Right ventricle myocardium inferior (tissue), 1 donor: ENCODE measurements at regions of chr6 and their contacts with region 1.

Region 1: DNA sequence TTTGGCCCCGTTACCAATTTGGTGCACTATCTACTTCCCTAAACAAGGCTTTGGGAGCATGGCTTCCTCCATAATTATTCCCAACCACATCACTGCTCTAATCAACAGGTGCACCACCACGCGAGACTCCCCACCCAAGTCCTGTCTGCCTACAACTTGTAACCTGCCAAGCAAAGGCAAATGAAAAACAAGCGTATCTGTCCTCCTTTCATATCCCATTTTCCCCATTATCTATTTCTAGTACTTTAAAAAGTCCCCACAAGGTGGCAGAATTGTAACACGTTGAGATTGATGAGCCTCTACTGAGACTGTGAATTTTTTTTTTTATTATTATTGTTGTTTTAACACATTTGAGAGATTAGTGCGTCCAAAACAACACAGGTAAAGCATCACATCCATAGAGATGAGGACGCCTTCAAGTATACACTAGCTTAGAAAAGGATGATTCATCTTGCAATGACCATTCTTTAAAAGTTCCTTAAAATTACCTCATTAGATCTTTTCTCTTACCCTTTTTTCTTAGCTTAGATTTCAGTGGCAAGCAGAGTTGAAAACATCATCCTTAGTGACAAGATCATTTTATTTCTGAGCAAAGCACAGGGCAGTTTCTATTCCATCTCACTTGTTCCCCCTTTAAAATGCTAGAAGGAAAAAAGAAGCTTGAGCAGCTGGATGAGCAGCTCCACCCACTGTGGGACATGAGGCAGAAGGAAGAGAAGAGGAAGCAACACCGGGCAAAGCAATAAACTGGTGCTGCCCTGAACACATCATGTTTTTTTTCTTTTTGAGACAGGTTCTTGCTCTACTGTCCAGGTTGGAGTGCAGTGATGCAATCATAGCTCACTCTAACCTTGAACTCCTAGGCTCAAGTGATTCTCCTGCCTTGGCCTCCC is 210.8 kb downstream of the ARHGAP18 start:
- DNase-seq: no peak
- ATAC-seq: peak; percentile 35

Region 2: GRCh38 chr6:129429956-129430355 is 69.2 kb before region 1 on chr6:
- intact Hi-C with region 1: no loop called
- DNase-seq: no peak
- ATAC-seq: no peak

Region 3: DNA sequence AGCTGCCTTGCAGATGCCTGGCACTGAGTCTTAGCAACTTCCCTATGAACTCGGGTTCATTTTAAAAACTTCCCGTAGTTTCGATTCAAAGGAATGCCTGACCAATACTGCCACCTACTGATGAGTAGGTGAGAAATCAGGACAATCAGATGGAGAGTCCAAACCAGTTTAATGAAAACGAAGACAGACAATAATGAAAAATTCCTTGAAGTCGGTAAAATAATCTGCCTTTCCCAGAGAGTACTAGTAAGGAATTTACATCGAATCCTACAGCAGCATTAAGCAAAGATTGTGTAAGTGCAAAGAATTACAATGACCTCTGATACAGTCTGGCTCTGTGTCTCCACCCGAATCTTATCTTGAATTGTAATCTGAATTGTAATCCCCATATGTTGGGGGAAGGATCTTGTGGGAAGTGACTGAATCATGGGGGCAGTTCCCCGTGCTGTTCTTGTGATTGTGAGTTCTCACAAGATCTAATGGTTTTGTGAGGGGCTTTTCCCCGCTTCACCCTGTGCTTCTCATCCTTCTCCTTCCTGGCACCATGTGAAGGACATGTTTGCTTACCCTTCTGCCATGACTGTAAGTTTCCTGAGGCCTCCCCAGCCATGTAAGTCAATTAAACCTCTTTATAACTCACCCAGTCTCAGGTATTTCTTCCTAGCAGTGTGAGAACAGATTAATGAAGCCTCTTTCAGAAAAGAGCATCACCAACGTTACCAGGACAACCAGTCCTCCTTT is 76.4 kb after region 1 on chr6:
- intact Hi-C with region 1: loop called (anchors 2 kb)
- DNase-seq: no peak
- ATAC-seq: peak; percentile 73

Region 4: DNA sequence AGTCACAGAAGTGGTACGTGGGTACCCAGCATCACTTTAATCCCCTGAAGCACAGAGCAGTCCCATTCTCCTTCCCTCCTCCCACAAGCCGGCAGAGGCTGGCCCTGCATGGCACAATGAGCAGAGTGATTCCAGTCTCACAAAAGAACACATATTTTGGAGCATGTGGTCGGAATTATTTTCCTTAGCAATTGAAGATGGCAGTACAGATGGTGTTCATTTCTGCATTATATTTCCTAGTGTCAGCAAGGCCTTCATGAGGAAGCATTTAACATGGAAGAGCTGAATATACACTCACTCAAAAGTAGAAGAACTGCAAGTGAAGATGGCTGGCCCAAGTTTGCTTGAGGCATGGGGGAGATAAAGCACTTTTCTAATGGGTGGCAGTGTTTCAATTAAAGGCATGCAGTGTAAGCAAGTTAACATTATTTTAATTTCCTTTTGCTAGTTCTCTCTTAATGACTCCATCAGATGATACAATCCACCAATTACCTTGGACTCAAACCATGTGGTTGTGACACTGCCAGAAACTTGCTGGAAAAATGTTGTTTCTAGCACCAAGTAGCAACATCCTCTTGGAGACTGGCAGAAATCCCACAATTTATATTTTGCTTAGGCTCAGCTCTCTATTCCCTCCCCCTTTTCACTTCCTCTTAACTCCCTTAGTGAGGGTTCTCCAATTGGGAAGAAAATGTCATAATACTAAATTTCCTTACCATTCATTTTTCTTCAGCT is 136.4 kb after region 1 on chr6:
- intact Hi-C with region 1: no loop called
- DNase-seq: no peak
- ATAC-seq: peak; percentile 28

Region 5: GRCh38 chr6:129686941-129687627 is 187.9 kb after region 1 on chr6:
- intact Hi-C with region 1: no loop called
- DNase-seq: no peak
- ATAC-seq: peak; percentile 64

Region 6: GRCh38 chr6:129748212-129748900 is 249.2 kb after region 1 on chr6:
- intact Hi-C with region 1: loop called (anchors 10 kb)
- DNase-seq: no peak
- ATAC-seq: peak; percentile 65